HCT116 (cell line): ENCODE measurements at regions of chr2 and their contacts with region 1.

Region 1: GRCh38 chr2:29923110-29923721 is 1.8 kb upstream of the ALK start:
- DNase-seq: peak; percentile 42
- ATAC-seq: peak; percentile 87
- H3K4me3 ChIP-seq: no peak overlapping the region
- H3K27ac ChIP-seq: no peak overlapping the region
- H3K4me1 ChIP-seq: no peaks in the 10 kb centered on the region
- H3K27me3 ChIP-seq: peaks cover 17% of the 10 kb centered on the region
- CTCF ChIP-seq: peak; percentile 74 to 92 (median 88)
- POLR2A ChIP-seq: no peak
- RAD21 ChIP-seq: peak; percentile 76

Region 2: GRCh38 chr2:30026087-30027055 is 103.2 kb after region 1 on chr2:
- CTCF ChIA-PET with region 1: interaction called, 7 read pairs
- POLR2A ChIA-PET with region 1: no interaction called
- RAD21 ChIA-PET with region 1: interaction called in 1 of 2 experiments, 3 read pairs
- intact Hi-C with region 1: loop called (anchors 1 kb)
- DNase-seq: peak; percentile 4
- ATAC-seq: peak; percentile 92
- H3K4me3 ChIP-seq: no peak overlapping the region
- H3K27ac ChIP-seq: no peak overlapping the region
- H3K4me1 ChIP-seq: no peaks in the 10 kb centered on the region
- H3K27me3 ChIP-seq: peaks cover 67% of the 10 kb centered on the region
- CTCF ChIP-seq: peak; percentile 44 to 84 (median 82); a peak in 5 of 6 replicates
- POLR2A ChIP-seq: no peak
- RAD21 ChIP-seq: peak; percentile 75

Region 3: GRCh38 chr2:30115141-30115980 is 192.1 kb after region 1 on chr2:
- CTCF ChIA-PET with region 1: no interaction called
- POLR2A ChIA-PET with region 1: no interaction called
- RAD21 ChIA-PET with region 1: no interaction called
- intact Hi-C with region 1: loop called (anchors 1 kb)
- DNase-seq: peak; percentile 76
- ATAC-seq: peak; percentile 97
- H3K4me3 ChIP-seq: no peak overlapping the region
- H3K27ac ChIP-seq: no peak overlapping the region
- H3K4me1 ChIP-seq: peaks cover 0 to 10% of the 10 kb centered on the region in 2 experiments; a peak in 3 of 4 replicates
- H3K27me3 ChIP-seq: no peaks in the 10 kb centered on the region
- CTCF ChIP-seq: peak; percentile 90 to 98 (median 97); a peak in 5 of 6 replicates
- POLR2A ChIP-seq: no peak
- RAD21 ChIP-seq: peak; percentile 92